Activated naive CD4-positive, alpha-beta T cell treated with anti-CD3 and anti-CD28 coated beads for 36 hours (primary cell): ENCODE measurements at regions of chr10 and their contacts with region 1.

Region 1: DNA sequence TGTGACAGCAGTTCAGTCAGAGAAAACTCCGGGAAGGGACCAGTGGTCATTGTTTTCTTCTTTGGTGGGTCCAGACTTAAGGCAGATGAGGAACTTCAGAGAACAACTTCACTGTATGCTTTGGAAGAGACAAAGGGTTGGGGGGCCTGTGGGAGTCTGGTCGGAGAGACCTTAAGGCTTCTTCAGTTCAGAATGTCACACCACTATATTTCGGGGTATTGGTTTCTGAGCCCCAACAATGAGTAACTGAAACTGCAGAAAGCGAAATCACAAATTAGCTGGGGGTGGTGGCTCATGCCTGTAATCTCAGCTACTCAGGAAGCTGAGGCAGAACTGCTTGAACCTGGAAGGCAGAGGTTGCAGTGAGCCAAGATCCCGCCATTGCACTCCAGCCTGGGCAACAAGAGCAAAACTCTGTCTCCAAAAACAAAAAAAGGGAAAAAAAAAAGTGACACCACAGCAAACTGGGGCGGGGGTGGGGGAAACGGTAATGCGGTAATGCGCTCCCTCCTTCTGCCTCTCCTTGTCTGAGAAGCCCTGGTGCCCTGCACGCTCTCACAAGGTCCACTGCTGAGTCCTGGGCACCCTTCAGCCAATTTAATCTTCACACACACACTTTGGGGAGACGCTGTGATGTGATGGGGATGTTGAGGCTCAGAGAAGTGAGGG is 2.2 kb upstream of the ADIRF start:
- DNase-seq: peak; percentile 51
- H3K4me3 Mint-ChIP-seq: peak overlapping the region; percentile 54
- H3K27ac Mint-ChIP-seq: peak overlapping the region; percentile 77
- H3K4me1 Mint-ChIP-seq: peaks cover 39% of the 10 kb centered on the region
- H3K27me3 Mint-ChIP-seq: no peaks in the 10 kb centered on the region

Region 2: DNA sequence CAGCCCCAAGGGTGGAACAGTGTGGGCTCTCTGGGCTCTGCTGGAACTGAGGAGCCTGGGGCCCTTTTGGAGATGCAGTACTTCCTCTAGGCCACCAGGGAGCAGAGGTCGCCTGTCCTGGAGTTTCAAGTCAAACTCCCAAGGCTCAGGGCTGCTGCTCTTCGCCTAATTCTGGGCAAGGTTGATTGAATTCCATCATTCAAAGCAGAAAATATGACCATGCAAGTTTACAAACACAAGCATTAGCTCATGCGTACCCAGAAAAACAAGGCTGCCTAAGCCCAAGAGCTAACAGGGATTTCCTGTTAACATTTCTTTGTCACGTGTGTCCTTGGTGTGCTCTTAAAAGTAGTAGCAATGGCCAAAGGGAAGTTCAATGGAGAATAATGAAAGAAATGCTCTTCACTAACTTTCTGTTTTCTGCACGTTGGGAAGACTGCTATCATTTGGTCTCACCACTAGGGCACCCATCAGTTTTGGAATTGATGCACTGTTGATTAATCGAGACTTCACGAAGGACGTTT is 277.7 kb before region 1 on chr10:
- CTCF ChIA-PET with region 1: no interaction called
- intact Hi-C with region 1: loop called (anchors 2 kb)
- DNase-seq: peak; percentile 66
- H3K4me3 Mint-ChIP-seq: no peak overlapping the region
- H3K27ac Mint-ChIP-seq: no peak overlapping the region
- H3K4me1 Mint-ChIP-seq: no peaks in the 10 kb centered on the region
- H3K27me3 Mint-ChIP-seq: no peaks in the 10 kb centered on the region

Region 3: GRCh38 chr10:86905429-86905828 is 60.7 kb before region 1 on chr10:
- CTCF ChIA-PET with region 1: no interaction called
- intact Hi-C with region 1: no loop called
- DNase-seq: no peak
- H3K4me3 Mint-ChIP-seq: no peak overlapping the region
- H3K27ac Mint-ChIP-seq: no peak overlapping the region
- H3K4me1 Mint-ChIP-seq: no peaks in the 10 kb centered on the region
- H3K27me3 Mint-ChIP-seq: no peaks in the 10 kb centered on the region

Region 4: DNA sequence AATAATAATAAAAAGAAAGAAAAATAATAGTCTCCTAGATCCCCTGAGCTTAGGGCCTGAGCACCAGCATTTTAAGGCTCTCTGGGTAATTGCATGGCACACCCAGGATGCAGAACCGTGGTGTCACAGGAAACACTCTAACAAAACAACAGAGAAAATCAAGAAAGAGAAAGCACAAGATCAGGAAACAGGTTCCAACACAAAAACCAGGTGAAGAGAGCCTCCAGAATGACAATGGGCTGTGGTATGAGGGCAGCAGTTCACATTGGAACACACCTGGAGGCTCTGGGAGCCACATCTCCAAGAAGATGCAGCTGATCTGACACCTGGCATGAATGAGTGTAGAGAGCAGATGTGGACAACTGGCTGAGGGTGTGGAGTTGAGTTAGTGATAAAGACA is 15.8 kb before region 1 on chr10:
- CTCF ChIA-PET with region 1: interaction called, 11 read pairs
- intact Hi-C with region 1: no loop called
- DNase-seq: peak; percentile 10
- H3K4me3 Mint-ChIP-seq: no peak overlapping the region
- H3K27ac Mint-ChIP-seq: peak overlapping the region; percentile 81
- H3K4me1 Mint-ChIP-seq: peaks cover 21% of the 10 kb centered on the region
- H3K27me3 Mint-ChIP-seq: no peaks in the 10 kb centered on the region

Region 5: GRCh38 chr10:87723500-87723899 is 757.4 kb after region 1 on chr10:
- CTCF ChIA-PET with region 1: no interaction called
- intact Hi-C with region 1: no loop called
- DNase-seq: no peak
- H3K4me3 Mint-ChIP-seq: no peak overlapping the region
- H3K27ac Mint-ChIP-seq: no peak overlapping the region
- H3K4me1 Mint-ChIP-seq: peaks cover 6% of the 10 kb centered on the region
- H3K27me3 Mint-ChIP-seq: peaks cover 2% of the 10 kb centered on the region